ENCODE measurements at regions of chr14 and their contacts with region 1.

Region 1: DNA sequence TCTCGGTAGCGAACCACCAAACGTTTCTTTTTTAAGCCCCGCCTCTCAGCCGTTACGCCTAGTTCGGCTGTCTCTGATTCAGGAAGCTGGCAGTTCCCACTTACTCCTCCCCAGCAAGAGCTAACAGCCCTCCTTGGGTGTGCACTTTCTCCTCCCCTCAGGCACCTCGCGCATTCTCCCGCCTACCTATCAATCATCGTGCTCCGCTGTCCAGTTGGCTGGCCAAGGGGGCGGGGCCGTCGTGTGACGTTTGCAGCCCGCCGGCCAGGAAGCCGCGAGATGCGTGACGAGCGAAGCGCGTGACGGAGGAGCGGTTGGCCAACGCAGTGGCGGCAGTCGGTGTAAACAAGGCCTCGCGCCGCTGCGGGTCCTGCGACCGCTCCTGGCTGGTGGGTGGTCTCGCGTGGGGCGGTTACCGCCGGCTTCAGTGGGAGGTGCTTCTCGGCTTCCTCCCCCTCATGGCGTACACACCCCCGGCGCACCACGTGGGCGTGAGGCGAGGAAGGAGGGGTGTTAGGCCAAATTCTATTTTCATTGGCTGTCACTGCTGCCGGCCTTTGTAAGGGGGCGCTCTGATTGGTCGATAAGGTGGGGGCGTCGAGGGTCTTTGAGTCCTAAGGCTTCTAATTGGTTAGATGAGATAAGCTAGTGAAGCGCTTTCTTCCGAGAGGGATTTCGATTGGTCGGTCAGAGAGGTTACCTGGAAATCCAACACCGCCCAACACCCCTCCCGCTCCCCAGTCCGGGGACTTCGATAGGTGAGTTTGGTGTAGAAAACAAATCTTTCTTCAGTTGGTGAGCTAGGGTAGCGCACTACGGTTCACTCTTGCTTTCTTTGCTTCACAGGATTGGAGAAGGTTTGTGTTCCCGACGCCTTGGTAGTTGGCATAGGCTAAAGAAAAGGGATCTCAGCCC is at the starts of genes DCAF11 and NRL:
- DNase-seq: peak; percentile 99
- H3K4me3 Mint-ChIP-seq: peak within 1 kb of the TSS; percentile 99
- H3K27ac Mint-ChIP-seq: peak within 1 kb of the TSS; percentile 100
- H3K4me1 Mint-ChIP-seq: peaks cover 34% of the 10 kb centered on the region
- H3K27me3 Mint-ChIP-seq: peaks cover 2% of the 10 kb centered on the region
- total RNA-seq, gene DCAF11: 55.8 and 57.3 TPM in 2 replicates
- total RNA-seq, gene NRL: 0.96 and 1.2 TPM in 2 replicates

Region 2: DNA sequence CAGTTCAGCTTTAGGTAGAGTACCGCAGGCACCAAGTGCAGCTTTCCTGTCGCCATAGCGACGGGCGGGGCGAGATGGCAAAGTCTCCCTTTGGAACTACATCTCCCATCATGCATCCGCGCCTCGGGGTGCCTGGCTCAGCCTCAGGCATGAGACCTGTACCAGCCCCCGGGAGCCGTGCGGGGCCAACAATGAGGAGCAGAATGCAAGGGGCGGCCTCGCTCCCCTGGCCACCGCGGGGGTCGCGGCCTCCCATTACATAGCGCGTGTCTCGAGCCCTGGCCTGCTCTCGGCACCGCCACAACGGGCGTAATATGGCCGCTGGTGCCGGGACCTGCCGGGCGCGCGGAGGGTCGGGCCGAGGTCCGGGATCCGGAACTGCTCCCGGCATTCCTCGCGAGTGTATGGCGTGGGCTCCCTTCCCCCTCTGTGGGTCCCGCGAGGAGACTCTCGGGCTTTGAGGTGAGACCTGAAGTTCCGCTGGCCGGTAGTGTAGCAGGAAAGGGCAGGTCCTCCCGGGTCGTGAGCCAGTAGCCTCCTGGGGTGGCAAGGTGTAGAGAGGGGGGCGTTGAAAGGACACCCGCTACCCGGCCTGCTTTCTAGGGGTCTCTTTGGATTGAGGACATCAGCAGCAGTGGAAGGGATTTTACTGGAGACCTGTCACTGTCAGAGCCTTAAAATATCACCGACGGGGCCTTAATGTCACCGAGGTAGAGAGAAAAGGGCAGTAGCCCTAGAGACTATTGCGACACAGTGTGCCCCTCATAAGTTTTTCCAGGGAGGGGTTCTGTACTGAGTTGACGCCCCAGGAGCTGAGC is 558.7 kb before region 1 on chr14 and contains the start of gene THTPA:
- intact Hi-C with region 1: loop called (anchors 5 kb)
- DNase-seq: peak; percentile 98
- H3K4me3 Mint-ChIP-seq: peak within 1 kb of the TSS; percentile 95
- H3K27ac Mint-ChIP-seq: peak within 1 kb of the TSS; percentile 98
- H3K4me1 Mint-ChIP-seq: peaks cover 30% of the 10 kb centered on the region
- H3K27me3 Mint-ChIP-seq: no peaks in the 10 kb centered on the region
- total RNA-seq, gene THTPA: 14.5 and 16.7 TPM in 2 replicates

Region 3: GRCh38 chr14:24080888-24081738 is 33.7 kb before region 1 on chr14:
- intact Hi-C with region 1: loop called (anchors 1 kb)
- DNase-seq: peak; percentile 93
- H3K4me3 Mint-ChIP-seq: peak overlapping the region; percentile 84
- H3K27ac Mint-ChIP-seq: peak overlapping the region; percentile 78
- H3K4me1 Mint-ChIP-seq: peaks cover 16% of the 10 kb centered on the region
- H3K27me3 Mint-ChIP-seq: peaks cover 6% of the 10 kb centered on the region

Region 4: DNA sequence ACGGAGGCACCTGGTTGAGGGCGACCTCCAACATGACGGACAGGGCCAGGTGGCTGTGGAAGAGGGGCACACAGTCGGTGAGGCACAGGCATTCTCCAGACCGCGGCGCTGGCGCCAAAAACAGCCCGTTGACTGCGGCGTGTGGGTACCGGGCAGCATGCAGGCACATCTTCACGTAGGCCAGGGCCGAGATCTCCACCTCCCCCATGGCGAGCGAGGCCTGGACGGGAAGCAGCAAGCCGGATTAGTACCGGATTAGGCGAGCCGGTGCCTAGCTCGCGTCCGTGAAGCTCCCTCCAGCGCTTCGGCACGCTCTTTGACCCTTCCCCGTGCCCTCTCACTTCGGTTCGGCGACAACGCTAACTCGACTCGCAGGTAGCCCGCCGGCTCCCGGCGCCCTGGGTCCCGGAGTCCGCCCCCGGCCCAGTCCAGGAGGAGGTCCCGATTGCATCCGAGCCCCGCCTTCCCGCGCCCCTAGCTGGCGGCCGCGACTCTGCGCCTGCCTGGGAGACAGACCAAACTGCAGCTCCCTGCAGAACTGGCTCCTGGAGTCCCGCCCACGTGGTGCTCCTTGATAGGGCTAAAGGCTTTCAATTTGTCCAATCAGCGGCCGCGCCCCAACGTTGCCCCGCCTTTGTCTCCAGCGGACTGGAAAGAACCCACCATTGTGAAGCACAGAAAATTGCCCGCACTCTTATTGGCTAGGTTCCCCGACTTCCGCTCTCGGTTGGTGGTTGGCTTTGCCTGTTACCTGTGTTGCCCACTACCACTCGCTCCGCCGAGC is 26.5 kb after region 1 on chr14 and contains the start of gene EMC9:
- intact Hi-C with region 1: loop called (anchors 1 kb)
- DNase-seq: peak; percentile 100
- H3K4me3 Mint-ChIP-seq: peak within 1 kb of the TSS; percentile 94
- H3K27ac Mint-ChIP-seq: peak within 1 kb of the TSS; percentile 94
- H3K4me1 Mint-ChIP-seq: peaks cover 69% of the 10 kb centered on the region
- H3K27me3 Mint-ChIP-seq: no peaks in the 10 kb centered on the region
- total RNA-seq, gene EMC9: 26.6 and 30.3 TPM in 2 replicates

Region 5: GRCh38 chr14:24195191-24196070 is 80.6 kb after region 1 on chr14 and contains the start of gene TM9SF1:
- intact Hi-C with region 1: loop called (anchors 1 kb)
- DNase-seq: peak; percentile 97
- H3K4me3 Mint-ChIP-seq: peak within 1 kb of the TSS; percentile 87
- H3K27ac Mint-ChIP-seq: peak within 1 kb of the TSS; percentile 96
- H3K4me1 Mint-ChIP-seq: peaks cover 46% of the 10 kb centered on the region
- H3K27me3 Mint-ChIP-seq: no peaks in the 10 kb centered on the region
- total RNA-seq, gene TM9SF1: 35.1 and 36.4 TPM in 2 replicates

Region 6: GRCh38 chr14:24431569-24432258 is 316.9 kb after region 1 on chr14:
- intact Hi-C with region 1: loop called (anchors 10 kb)
- DNase-seq: peak; percentile 97
- H3K4me3 Mint-ChIP-seq: peak overlapping the region; percentile 92
- H3K27ac Mint-ChIP-seq: peak overlapping the region; percentile 94
- H3K4me1 Mint-ChIP-seq: peaks cover 45% of the 10 kb centered on the region
- H3K27me3 Mint-ChIP-seq: no peaks in the 10 kb centered on the region